ENCODE measurements at regions of chr6 and their contacts with region 1.

Region 1: DNA sequence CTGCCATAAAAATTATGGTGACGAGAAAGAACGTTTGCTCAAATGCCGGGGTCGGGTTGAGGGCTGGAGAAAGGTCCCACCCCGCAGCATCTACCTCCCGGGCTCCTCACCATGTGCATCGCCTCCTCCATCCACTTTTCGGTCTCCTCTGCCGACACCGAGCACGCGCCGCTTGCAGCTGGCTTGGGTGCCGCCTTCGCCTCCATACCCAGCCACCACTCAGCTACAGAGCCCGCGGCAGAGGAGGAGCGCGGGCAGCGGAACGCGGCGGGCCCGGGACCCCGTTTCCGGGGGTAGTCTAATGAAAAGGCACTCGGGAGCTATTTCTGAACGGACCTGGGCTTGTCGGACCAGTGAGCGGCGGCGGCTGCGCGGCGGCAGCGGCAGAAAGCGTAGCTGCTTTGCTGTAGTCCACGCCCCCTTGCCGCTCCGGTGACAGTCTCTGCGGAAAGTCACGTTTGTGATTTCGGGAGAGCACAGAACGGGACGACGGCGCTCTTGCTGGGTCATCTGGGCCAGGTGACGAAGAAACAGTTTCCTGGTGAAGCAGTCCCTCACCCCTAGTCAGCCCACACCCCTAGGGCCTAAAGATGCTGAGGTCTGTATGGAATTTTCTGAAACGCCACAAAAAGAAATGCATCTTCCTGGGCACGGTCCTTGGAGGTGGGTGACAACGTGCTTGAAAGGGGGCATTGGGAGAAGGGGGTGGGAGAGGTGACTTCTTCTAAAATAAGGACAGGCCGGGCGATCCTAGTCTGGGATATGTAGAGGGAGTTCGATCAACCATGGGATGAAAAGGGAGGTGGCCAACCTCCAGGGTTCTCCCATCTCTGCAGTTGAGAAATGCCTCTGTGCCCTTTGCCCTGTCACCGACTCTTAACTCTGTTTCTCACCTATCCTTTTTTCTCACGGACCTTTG is at the starts of genes ADAT2 and PEX3:
- DNase-seq: peak; percentile 94
- H3K4me3 ChIP-seq: peak within 1 kb of the TSS; percentile 63 to 93 (median 82)
- H3K27ac ChIP-seq: peak within 1 kb of the TSS; percentile 85
- H3K4me1 ChIP-seq: no peaks in the 10 kb centered on the region
- H3K27me3 ChIP-seq: no peaks in the 10 kb centered on the region
- CTCF ChIP-seq: no peak
- total RNA-seq, gene ADAT2: 5.7 to 17.6 TPM
- total RNA-seq, gene PEX3: 24.7 to 38.0 TPM

Region 2: GRCh38 chr6:143501851-143502250 is 51.1 kb after region 1 on chr6:
- CTCF ChIA-PET with region 1: interaction called, 3 read pairs
- dilution Hi-C with region 1: no loop called
- in situ Hi-C with region 1: no loop called
- intact Hi-C with region 1: loop called (anchors 5 kb)
- DNase-seq: no peak
- H3K4me3 ChIP-seq: no peak overlapping the region
- H3K27ac ChIP-seq: no peak overlapping the region
- H3K4me1 ChIP-seq: no peaks in the 10 kb centered on the region
- H3K27me3 ChIP-seq: no peaks in the 10 kb centered on the region
- CTCF ChIP-seq: peak in 1 of 2 donors; percentile 17

Region 3: GRCh38 chr6:143542888-143543287 is 92.2 kb after region 1 on chr6:
- CTCF ChIA-PET with region 1: no interaction called
- dilution Hi-C with region 1: no loop called
- in situ Hi-C with region 1: no loop called
- intact Hi-C with region 1: loop called (anchors 5 kb)
- DNase-seq: peak; percentile 61
- H3K4me3 ChIP-seq: no peak overlapping the region
- H3K27ac ChIP-seq: no peak overlapping the region
- H3K4me1 ChIP-seq: peaks cover 10% of the 10 kb centered on the region
- H3K27me3 ChIP-seq: no peaks in the 10 kb centered on the region
- CTCF ChIP-seq: no peak